ENCODE measurements at regions of chr15 and their contacts with region 1.

Region 1: GRCh38 chr15:99777136-99777535 is 43.9 kb upstream of the LYSMD4 start:
- DNase-seq: no peak
- H3K4me3 ChIP-seq: no peak overlapping the region
- H3K27ac ChIP-seq: no peak overlapping the region
- H3K4me1 ChIP-seq: no peaks in the 10 kb centered on the region
- H3K27me3 ChIP-seq: no peaks in the 10 kb centered on the region
- CTCF ChIP-seq: no peak

Region 2: DNA sequence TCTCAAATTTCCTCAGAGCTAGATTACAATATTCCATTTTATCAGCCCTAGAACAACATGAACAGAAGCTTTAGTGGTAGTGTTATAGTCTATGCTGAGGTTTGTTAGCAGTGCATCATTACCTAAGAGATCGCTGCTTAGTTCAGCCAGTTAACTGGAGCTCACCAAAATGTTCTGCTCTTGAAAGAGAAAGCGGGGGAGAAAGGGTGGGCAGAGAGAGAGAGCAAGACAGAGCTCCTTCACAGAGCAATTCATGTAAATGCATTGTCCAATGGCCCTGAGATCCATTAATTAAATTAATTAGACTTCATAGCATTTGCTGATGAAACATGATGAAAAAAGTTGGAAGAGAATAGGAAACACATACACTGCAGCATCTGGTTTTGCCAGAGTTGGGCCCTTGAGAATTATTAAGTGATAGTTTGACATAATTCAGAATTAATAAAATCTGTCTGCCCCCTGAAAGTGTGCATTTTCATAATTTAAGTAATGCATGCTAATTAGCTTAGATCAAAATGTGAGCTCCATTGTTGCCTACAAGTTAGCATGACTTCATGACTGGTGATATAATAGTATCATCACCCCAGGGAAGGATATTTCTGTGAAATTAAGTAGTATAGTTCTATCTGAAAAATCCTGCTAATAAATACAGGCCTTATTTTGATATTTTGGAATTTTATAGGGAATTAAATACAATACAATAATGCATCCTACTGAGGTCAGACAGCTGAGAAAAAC is 43.0 kb after region 1 on chr15:
- CTCF ChIA-PET with region 1: no interaction called
- dilution Hi-C with region 1: loop called (anchors 5 kb)
- in situ Hi-C with region 1: no loop called
- intact Hi-C with region 1: no loop called
- DNase-seq: no peak
- H3K4me3 ChIP-seq: no peak overlapping the region
- H3K27ac ChIP-seq: no peak overlapping the region
- H3K4me1 ChIP-seq: no peaks in the 10 kb centered on the region
- H3K27me3 ChIP-seq: peaks cover 3% of the 10 kb centered on the region
- CTCF ChIP-seq: no peak

Measured in mammary epithelial cell (primary cell).